HEK293 (cell line): ENCODE measurements at regions of chr11 and their contacts with region 1.

Region 1: GRCh38 chr11:62542750-62543567 is 3.6 kb downstream of the AHNAK start:
- H3K4me3 ChIP-seq: peak overlapping the region; percentile 20
- H3K27ac ChIP-seq: no peak overlapping the region
- H3K4me1 ChIP-seq: peaks cover 7% of the 10 kb centered on the region
- CTCF ChIP-seq: peak; percentile 95

Region 2: DNA sequence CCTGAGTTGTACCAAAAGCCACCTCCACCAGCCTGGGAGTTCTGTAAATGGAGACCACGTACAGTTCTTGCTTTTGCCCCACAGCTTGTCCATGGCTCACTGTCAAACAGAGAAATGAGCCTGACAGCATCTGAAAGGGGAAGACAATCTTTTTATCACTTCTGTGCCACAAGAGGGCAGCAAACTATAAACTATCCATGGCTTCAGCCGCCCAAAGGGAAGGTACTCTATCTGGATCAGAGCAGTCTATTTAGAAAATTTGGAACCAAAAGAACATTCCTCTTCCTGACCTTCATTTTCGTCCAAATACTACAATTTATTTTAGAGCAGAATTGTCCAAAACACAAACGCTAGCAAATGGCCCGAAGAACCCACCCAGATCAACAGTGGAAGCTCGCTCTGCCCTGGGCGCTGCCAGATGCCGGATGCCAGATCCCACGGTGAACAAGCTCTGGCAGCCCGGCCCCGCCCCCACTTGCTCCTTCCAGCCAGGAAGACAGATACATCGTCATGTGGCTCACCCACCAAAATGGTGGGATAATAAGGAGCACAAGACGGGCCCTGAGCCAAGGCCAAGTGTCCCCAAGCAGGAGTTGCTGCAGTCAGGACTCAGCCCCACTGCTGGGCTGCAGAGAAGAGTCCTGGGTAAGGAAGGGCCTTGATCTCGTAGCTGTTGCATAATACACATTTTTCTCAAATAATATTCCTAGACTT is 148.0 kb before region 1 on chr11:
- CTCF ChIA-PET with region 1: interaction called, 86 read pairs
- POLR2A ChIA-PET with region 1: interaction called, 10 read pairs
- H3K4me3 ChIP-seq: no peak overlapping the region
- H3K27ac ChIP-seq: no peak overlapping the region
- H3K4me1 ChIP-seq: no peaks in the 10 kb centered on the region
- CTCF ChIP-seq: no peak

Region 3: DNA sequence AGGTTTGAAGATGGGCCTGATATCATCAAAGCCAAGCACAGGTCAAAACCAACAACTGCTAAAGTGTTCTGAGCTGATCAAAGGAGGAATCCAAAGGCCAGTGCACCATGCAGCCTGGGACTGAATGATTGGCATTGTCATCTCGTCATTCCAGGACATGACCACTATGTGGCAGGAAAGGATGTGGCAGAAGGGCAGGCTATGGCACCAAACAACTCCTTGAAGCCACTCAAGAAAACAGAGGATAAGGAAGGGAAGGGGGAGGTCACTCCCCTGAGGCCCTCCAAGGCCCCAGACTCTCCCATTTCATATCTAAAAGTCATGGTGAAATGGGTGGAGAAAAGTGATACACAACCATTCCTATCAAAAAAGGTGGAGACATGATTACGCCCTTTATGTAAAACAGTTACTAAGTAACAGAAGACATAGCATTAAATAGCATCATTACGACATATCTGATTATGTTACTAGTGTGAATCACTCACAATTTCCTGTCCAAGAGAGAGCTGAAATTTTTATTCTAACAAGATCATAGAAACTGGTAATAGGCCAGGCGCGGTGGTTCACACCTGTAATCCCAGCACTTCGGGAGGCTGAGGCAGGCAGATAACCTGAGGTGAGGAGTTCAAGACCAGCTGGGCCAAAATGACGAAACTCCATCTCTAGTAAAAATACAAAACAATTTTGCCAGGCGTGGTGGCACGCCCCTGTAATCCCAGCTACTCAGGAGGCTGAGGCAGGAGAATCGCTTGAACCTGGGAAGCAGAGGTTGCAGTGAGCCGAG is 45.6 kb before region 1 on chr11:
- CTCF ChIA-PET with region 1: interaction called, 37 read pairs
- POLR2A ChIA-PET with region 1: interaction called, 7 read pairs
- H3K4me3 ChIP-seq: no peak overlapping the region
- H3K27ac ChIP-seq: no peak overlapping the region
- H3K4me1 ChIP-seq: no peaks in the 10 kb centered on the region
- CTCF ChIP-seq: peak; percentile 41; the same call in 1 of the 2 replicates

Region 4: GRCh38 chr11:62514151-62514550 is 28.8 kb before region 1 on chr11:
- CTCF ChIA-PET with region 1: interaction called, 11 read pairs
- POLR2A ChIA-PET with region 1: no interaction called
- H3K4me3 ChIP-seq: no peak overlapping the region
- H3K27ac ChIP-seq: no peak overlapping the region
- H3K4me1 ChIP-seq: no peaks in the 10 kb centered on the region
- CTCF ChIP-seq: no peak

Region 5: DNA sequence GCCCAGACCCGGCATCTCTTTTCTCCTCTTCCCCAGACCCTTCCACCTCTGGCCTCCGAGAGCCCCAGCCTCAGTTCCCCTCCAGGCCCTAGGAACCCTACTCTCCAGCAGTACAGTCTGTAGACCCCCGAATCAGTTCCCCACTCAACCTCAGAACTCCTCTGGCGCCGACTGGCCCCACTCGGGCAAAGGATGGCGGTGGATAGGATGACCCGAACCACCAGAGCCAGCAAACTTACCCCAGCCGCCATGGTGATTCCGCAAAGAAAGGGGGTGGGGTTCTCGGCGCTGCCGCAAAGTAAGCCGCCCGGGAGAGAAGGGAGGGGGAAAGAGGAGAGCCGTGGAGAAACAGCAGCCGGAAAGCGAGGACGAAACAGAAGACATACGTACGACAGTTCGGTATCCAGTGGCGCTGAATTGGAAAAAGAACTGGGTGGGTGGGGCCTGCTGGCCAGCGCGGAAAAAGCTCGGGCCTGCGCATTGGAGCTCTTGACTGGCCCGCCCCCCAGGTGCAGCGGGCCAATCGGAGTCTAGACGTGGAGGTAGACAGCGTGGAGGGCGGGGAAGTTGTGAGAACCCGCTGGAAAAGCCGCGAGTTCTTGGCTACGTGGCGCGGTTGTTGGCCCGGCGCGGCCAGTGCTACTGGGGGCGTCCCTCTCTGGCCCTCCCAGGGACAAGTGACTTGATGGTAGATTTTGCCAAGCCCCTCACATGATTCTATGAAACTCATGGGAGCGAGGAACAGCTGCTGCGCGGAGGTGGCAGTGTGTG is 30.8 kb after region 1 on chr11 and contains the start of gene EEF1G:
- CTCF ChIA-PET with region 1: interaction called, 5 read pairs
- POLR2A ChIA-PET with region 1: interaction called, 13 read pairs
- H3K4me3 ChIP-seq: peak within 1 kb of the TSS; percentile 90
- H3K27ac ChIP-seq: peak within 1 kb of the TSS; percentile 99
- H3K4me1 ChIP-seq: no peaks in the 10 kb centered on the region
- CTCF ChIP-seq: no peak